ENCODE measurements at regions of chr6 and their contacts with region 1.

Region 1: GRCh38 chr6:9732056-9732455 is 682.8 kb downstream of the TFAP2A start:
- DNase-seq: no peak
- ATAC-seq: no peak
- H3K4me3 ChIP-seq: no peak overlapping the region
- H3K27ac ChIP-seq: no peak overlapping the region
- H3K4me1 ChIP-seq: no peaks in the 10 kb centered on the region
- H3K27me3 ChIP-seq: no peaks in the 10 kb centered on the region
- CTCF ChIP-seq: no peak
- EP300 ChIP-seq: no peak
- POLR2A ChIP-seq: no peak
- RAD21 ChIP-seq: no peak

Region 2: DNA sequence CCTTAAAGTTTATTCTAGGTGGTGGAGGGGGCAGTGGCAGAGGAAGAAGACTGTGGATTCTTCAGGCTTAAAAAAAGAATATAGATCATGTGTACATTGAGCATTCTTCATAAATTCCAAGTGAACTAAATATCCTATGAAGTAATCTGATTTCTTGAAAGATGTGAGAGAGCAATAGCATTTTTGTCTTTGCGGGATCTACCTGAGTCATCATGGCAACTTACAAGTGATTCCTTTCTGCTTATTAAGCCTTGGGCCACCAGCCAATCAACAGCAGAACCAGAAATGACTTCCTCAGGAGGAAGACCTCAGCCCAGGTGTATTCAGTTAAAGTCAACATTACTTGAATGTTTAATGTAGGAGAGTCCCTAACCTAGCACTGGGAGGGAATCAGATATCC is 74.1 kb before region 1 on chr6:
- CTCF ChIA-PET with region 1: no interaction called
- POLR2A ChIA-PET with region 1: no interaction called
- RAD21 ChIA-PET with region 1: no interaction called
- SMC1A ChIA-PET with region 1: no interaction called
- in situ Hi-C with region 1: no loop called
- intact Hi-C with region 1: no loop called
- DNase-seq: no peak
- ATAC-seq: no peak
- H3K4me3 ChIP-seq: no peak overlapping the region
- H3K27ac ChIP-seq: no peak overlapping the region
- H3K4me1 ChIP-seq: no peaks in the 10 kb centered on the region
- H3K27me3 ChIP-seq: no peaks in the 10 kb centered on the region
- CTCF ChIP-seq: no peak
- EP300 ChIP-seq: no peak
- POLR2A ChIP-seq: no peak
- RAD21 ChIP-seq: no peak

Region 3: DNA sequence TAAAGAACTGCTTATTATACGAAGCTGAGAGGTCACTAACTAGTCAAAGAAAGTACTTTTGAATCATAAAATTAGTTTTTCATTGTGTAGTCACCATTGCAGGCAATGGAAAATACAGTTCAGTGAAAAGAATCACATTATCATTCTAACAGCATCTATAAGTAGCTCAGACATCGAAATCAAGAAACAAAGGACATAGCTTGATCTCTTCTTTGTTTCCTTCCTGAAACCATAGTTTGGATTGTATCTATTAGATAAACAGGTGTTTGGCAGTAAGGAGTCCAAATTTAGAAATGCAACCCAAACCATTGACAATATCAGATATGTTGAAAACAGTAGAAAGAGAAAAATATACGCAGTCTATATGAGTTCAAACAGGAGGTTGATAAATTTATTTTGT is 14.5 kb before region 1 on chr6:
- CTCF ChIA-PET with region 1: interaction called, 5 read pairs
- POLR2A ChIA-PET with region 1: no interaction called
- RAD21 ChIA-PET with region 1: interaction called, 3 read pairs
- SMC1A ChIA-PET with region 1: interaction called, 16 read pairs
- in situ Hi-C with region 1: no loop called
- intact Hi-C with region 1: no loop called
- DNase-seq: no peak
- ATAC-seq: no peak
- H3K4me3 ChIP-seq: no peak overlapping the region
- H3K27ac ChIP-seq: no peak overlapping the region
- H3K4me1 ChIP-seq: no peaks in the 10 kb centered on the region
- H3K27me3 ChIP-seq: no peaks in the 10 kb centered on the region
- CTCF ChIP-seq: no peak
- EP300 ChIP-seq: no peak
- POLR2A ChIP-seq: no peak
- RAD21 ChIP-seq: no peak

Region 4: DNA sequence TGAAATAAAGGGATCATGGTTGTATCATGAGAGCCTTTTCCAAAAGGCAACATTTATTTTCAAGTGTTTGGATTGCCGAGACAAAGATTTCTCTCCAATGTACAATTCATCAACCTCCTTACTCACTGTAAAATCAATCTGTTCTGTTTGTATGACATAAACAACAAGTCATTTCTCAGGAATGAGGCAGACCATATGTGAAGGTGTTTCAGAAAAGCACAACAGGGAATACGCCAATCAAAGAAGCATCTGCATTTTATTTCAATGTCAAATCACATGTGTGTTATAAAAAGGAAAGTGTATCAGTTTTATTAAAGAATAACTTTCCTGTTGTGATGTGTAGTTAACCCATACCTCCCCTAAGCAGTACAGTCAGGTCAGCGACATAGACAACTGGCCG is 29.2 kb after region 1 on chr6:
- CTCF ChIA-PET with region 1: no interaction called
- POLR2A ChIA-PET with region 1: no interaction called
- RAD21 ChIA-PET with region 1: interaction called, 3 read pairs
- SMC1A ChIA-PET with region 1: interaction called, 12 read pairs
- in situ Hi-C with region 1: no loop called
- intact Hi-C with region 1: no loop called
- DNase-seq: no peak
- ATAC-seq: no peak
- H3K4me3 ChIP-seq: no peak overlapping the region
- H3K27ac ChIP-seq: no peak overlapping the region
- H3K4me1 ChIP-seq: no peaks in the 10 kb centered on the region
- H3K27me3 ChIP-seq: no peaks in the 10 kb centered on the region
- CTCF ChIP-seq: no peak
- EP300 ChIP-seq: no peak
- POLR2A ChIP-seq: no peak
- RAD21 ChIP-seq: no peak